ENCODE measurements at regions of chr5 and their contacts with region 1.

Region 1: GRCh38 chr5:65481635-65482295 is at the start of gene ADAMTS6:
- DNase-seq: peak; percentile 55
- ATAC-seq: peak; percentile 86
- H3K4me3 ChIP-seq: peak within 1 kb of the TSS; percentile 79
- H3K27ac ChIP-seq: peak within 1 kb of the TSS; percentile 78
- H3K4me1 ChIP-seq: peaks cover 4% of the 10 kb centered on the region; the same call in 1 of the 2 replicates
- H3K27me3 ChIP-seq: no peaks in the 10 kb centered on the region
- CTCF ChIP-seq: no peak
- EP300 ChIP-seq: no peak
- POLR2A ChIP-seq: peak; percentile 59
- RAD21 ChIP-seq: no peak
- polyA plus RNA-seq, gene ADAMTS6: 1.1 to 1.2 TPM

Region 2: GRCh38 chr5:64634997-64635686 is 846.6 kb before region 1 on chr5:
- CTCF ChIA-PET with region 1: interaction called, 21 read pairs
- POLR2A ChIA-PET with region 1: interaction called, 4 read pairs
- RAD21 ChIA-PET with region 1: interaction called, 13 read pairs
- SMC1A ChIA-PET with region 1: interaction called, 6 read pairs
- in situ Hi-C with region 1: loop called (anchors 10 kb)
- intact Hi-C with region 1: loop called (anchors 2 kb)
- DNase-seq: no peak
- ATAC-seq: peak; percentile 53
- H3K4me3 ChIP-seq: no peak overlapping the region
- H3K27ac ChIP-seq: no peak overlapping the region
- H3K4me1 ChIP-seq: 0 out of 2 replicates have a peak, but pooled peaks cover 5% of the 10 kb centered on the region
- H3K27me3 ChIP-seq: no peaks in the 10 kb centered on the region; a peak in 1 of 4 replicates
- CTCF ChIP-seq: peak; percentile 47 to 59 (median 58); a peak in 5 of 6 replicates
- EP300 ChIP-seq: no peak
- POLR2A ChIP-seq: no peak
- RAD21 ChIP-seq: peak; percentile 80

Region 3: DNA sequence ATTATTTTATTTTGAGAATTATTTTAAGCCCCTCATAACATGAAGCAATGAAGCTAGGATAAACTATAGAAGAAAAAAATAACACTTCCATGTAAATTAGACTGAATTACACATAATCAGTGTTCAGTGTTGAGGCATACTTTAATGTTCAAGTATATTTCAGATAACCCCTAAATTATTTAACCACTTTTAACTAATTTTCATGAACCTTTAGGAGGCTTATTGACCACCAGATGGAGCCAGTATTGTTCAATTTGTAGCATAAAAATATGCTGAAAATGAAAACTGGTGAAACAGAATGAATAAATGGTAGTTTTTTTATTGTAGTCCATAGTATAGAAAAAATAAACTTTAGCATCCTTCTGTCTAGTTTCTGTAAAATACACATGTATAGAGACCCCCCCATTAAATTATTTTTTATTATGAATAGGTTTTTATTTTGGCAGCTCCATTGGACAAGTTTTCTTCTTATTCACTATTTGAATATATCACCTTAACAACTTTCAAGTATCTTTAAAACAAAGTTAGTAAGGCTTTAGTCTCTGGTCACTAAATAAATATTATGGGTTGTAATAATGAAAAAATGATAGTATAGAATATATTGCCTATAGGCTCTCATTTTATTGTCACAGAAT is 522.9 kb before region 1 on chr5:
- CTCF ChIA-PET with region 1: interaction called, 123 read pairs
- POLR2A ChIA-PET with region 1: interaction called, 5 read pairs
- RAD21 ChIA-PET with region 1: interaction called, 104 read pairs
- SMC1A ChIA-PET with region 1: interaction called, 88 read pairs
- in situ Hi-C with region 1: no loop called
- intact Hi-C with region 1: loop called (anchors 1 kb)
- DNase-seq: no peak
- ATAC-seq: peak; percentile 61
- H3K4me3 ChIP-seq: no peak overlapping the region
- H3K27ac ChIP-seq: no peak overlapping the region
- H3K4me1 ChIP-seq: no peaks in the 10 kb centered on the region
- H3K27me3 ChIP-seq: no peaks in the 10 kb centered on the region
- CTCF ChIP-seq: peak in 2 of 3 experiments; percentile 36 to 49; a peak in 4 of 6 replicates
- EP300 ChIP-seq: no peak
- POLR2A ChIP-seq: no peak
- RAD21 ChIP-seq: peak; percentile 86

Region 4: DNA sequence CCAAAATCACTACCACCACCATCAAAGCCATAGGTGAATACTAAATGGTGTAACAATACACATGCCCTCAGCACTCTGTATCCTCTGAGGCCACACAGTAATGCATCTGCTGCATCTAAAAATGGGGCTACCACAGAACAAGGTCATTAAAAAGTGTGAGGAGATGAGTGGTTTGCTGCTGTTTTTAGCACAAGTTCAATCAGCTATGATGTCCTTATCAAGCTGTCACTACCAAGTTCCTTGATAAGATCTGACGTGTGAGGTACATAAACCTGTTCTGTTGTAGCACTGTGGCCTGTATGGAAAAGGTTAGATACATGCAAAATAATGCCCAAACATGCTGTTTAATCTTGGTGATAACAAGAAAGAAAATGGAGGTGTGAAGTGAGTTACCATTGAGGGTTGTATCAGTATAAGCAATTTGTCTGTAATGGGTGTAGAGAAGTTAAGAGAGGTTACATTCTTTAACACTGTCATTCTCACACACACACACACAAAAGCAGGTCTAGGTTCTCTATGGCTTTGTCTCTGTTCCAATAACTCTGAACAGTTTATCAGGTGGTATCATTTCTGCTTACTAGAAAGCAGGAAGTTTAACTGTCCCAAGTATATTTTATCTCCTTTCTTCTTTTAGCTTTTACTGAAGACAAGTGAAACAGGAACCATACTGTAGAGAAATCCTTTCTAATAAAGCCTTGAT is 460.1 kb before region 1 on chr5:
- CTCF ChIA-PET with region 1: interaction called, 4 read pairs
- POLR2A ChIA-PET with region 1: no interaction called
- RAD21 ChIA-PET with region 1: no interaction called
- SMC1A ChIA-PET with region 1: interaction called, 23 read pairs
- in situ Hi-C with region 1: no loop called
- intact Hi-C with region 1: no loop called
- DNase-seq: peak; percentile 41
- ATAC-seq: peak; percentile 87
- H3K4me3 ChIP-seq: no peak overlapping the region
- H3K27ac ChIP-seq: peak overlapping the region; percentile 57
- H3K4me1 ChIP-seq: peaks cover 25% of the 10 kb centered on the region
- H3K27me3 ChIP-seq: no peaks in the 10 kb centered on the region
- CTCF ChIP-seq: no peak
- EP300 ChIP-seq: peak in 1 of 2 experiments; percentile 12; a peak in 1 of 4 replicates
- POLR2A ChIP-seq: no peak
- RAD21 ChIP-seq: no peak

Region 5: GRCh38 chr5:65061250-65061973 is 420.4 kb before region 1 on chr5:
- CTCF ChIA-PET with region 1: interaction called, 11 read pairs
- POLR2A ChIA-PET with region 1: interaction called, 4 read pairs
- RAD21 ChIA-PET with region 1: interaction called, 90 read pairs
- SMC1A ChIA-PET with region 1: interaction called, 28 read pairs
- in situ Hi-C with region 1: no loop called
- intact Hi-C with region 1: loop called (anchors 5 kb)
- DNase-seq: peak; percentile 77
- ATAC-seq: peak; percentile 71
- H3K4me3 ChIP-seq: peak overlapping the region; percentile 41; the same call in 1 of the 2 replicates
- H3K27ac ChIP-seq: peak overlapping the region; percentile 95
- H3K4me1 ChIP-seq: peaks cover 60% of the 10 kb centered on the region
- H3K27me3 ChIP-seq: no peaks in the 10 kb centered on the region
- CTCF ChIP-seq: no peak
- EP300 ChIP-seq: peak in 1 of 2 experiments; percentile 59; a peak in 1 of 4 replicates
- POLR2A ChIP-seq: peak; percentile 29; the same call in 1 of the 2 replicates
- RAD21 ChIP-seq: peak; percentile 34; the same call in 1 of the 2 replicates

Region 6: DNA sequence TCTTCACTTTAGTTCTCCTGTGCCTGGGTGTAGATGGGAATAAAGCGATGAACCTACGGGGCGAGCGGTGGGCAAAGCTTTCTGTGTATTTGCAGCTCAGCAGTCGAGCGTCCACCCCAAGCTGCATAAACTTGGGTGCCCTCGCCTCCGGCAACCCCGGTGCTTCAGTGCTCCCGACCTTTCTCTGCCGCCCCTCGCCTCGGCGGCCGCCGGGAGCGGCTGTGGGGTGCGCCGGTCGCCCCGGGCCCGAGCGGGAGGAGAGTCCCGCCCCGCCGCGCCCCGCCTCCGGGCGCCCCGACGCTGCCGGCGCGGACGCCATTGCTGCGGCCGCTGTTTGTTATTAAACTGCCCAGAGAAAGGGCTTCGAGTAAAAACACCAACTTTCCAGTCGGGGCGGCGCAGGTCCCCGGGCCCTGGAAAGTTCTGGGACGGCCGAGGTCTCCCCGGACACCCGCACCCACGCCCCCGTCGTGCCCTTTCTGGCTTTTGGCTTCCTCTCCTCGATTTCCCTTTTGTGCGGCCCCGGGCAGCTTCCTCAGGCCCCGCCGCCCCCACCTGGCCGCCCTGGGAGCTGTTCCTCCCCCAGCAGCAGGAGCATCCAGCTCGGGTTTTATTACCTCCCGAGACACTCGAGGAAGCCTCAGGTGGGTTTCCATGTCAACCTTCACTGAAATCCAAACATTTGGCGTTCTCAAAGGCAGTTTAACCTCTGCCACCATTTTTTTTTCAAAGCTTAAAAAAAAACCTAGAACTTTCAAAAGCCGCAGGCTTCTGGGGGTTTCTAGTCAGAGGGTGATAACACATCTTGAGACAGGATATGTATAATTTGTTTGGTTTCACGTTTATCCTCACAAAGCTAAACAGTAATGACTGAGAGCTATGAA is 378.7 kb before region 1 on chr5:
- CTCF ChIA-PET with region 1: interaction called, 58 read pairs
- POLR2A ChIA-PET with region 1: interaction called, 7 read pairs
- RAD21 ChIA-PET with region 1: interaction called, 102 read pairs
- SMC1A ChIA-PET with region 1: interaction called, 73 read pairs
- in situ Hi-C with region 1: no loop called
- intact Hi-C with region 1: loop called (anchors 1 kb)
- DNase-seq: no peak
- ATAC-seq: peak; percentile 88
- H3K4me3 ChIP-seq: peak overlapping the region; percentile 86
- H3K27ac ChIP-seq: peak overlapping the region; percentile 76
- H3K4me1 ChIP-seq: peaks cover 28% of the 10 kb centered on the region
- H3K27me3 ChIP-seq: no peaks in the 10 kb centered on the region
- CTCF ChIP-seq: peak in 2 of 3 experiments; percentile 33 to 44; a peak in 3 of 6 replicates
- EP300 ChIP-seq: no peak
- POLR2A ChIP-seq: peak; percentile 75
- RAD21 ChIP-seq: peak; percentile 33; the same call in 1 of the 2 replicates

Region 7: GRCh38 chr5:65426656-65427055 is 55.1 kb before region 1 on chr5:
- CTCF ChIA-PET with region 1: interaction called, 3 read pairs
- POLR2A ChIA-PET with region 1: no interaction called
- RAD21 ChIA-PET with region 1: interaction called, 4 read pairs
- SMC1A ChIA-PET with region 1: no interaction called
- in situ Hi-C with region 1: no loop called
- intact Hi-C with region 1: loop called (anchors 10 kb)
- DNase-seq: no peak
- ATAC-seq: no peak
- H3K4me3 ChIP-seq: no peak overlapping the region
- H3K27ac ChIP-seq: no peak overlapping the region
- H3K4me1 ChIP-seq: no peaks in the 10 kb centered on the region
- H3K27me3 ChIP-seq: no peaks in the 10 kb centered on the region
- CTCF ChIP-seq: no peak
- EP300 ChIP-seq: no peak
- POLR2A ChIP-seq: no peak
- RAD21 ChIP-seq: no peak

Region 8: GRCh38 chr5:65651144-65651543 is 169.4 kb after region 1 on chr5:
- CTCF ChIA-PET with region 1: no interaction called
- POLR2A ChIA-PET with region 1: no interaction called
- RAD21 ChIA-PET with region 1: no interaction called
- SMC1A ChIA-PET with region 1: no interaction called
- in situ Hi-C with region 1: no loop called
- intact Hi-C with region 1: no loop called
- DNase-seq: no peak
- ATAC-seq: no peak
- H3K4me3 ChIP-seq: no peak overlapping the region
- H3K27ac ChIP-seq: no peak overlapping the region
- H3K4me1 ChIP-seq: no peaks in the 10 kb centered on the region
- H3K27me3 ChIP-seq: no peaks in the 10 kb centered on the region
- CTCF ChIP-seq: no peak
- EP300 ChIP-seq: no peak
- POLR2A ChIP-seq: no peak
- RAD21 ChIP-seq: no peak

Measured in GM12878 (cell line).